ENCODE measurements at regions of chr1 and their contacts with region 1.

Region 1: GRCh38 chr1:119008483-119009311 is 20.6 kb upstream of the TBX15 start:
- DNase-seq: peak in 1 of 10 donors; percentile 55

Region 2: DNA sequence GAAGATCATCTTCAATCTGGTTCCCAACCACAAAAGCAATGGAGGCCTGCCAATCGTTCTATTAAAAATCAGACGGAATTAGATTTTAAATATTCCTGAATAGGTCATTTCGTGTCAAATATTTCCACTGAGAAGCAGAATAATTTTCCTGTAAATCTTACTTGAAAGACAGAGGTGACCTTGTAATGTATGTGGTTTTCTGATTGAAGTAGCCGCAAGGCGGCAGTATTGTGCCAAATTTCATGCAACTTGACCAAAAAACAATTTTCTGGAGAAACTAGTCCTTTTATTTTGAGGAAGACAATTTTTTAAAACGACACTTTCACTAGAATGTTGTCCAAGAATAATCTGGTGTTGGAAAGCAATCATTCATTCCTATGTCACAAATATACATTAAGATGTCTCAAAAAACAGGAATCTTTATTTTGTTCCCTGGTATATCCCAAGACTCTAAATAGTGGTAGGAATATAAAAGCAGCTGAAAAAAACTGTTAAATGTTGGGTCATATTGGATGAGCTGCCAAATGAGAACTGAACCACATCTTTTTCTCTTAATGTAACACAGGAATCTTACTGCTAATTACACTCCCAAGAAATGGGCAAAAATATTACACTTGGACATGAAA is 857.3 kb before region 1 on chr1:
- intact Hi-C with region 1: loop called (anchors 1 kb)
- DNase-seq: peak in 6 of 10 donors; percentile 41 to 76 (median 57)

Region 3: GRCh38 chr1:118979754-118980575 is 28.7 kb before region 1 on chr1:
- intact Hi-C with region 1: no loop called
- DNase-seq: no peak

Measured in posterior cingulate gyrus (tissue), 11 donors.